ENCODE measurements at regions of chr9 and their contacts with region 1.

Region 1: DNA sequence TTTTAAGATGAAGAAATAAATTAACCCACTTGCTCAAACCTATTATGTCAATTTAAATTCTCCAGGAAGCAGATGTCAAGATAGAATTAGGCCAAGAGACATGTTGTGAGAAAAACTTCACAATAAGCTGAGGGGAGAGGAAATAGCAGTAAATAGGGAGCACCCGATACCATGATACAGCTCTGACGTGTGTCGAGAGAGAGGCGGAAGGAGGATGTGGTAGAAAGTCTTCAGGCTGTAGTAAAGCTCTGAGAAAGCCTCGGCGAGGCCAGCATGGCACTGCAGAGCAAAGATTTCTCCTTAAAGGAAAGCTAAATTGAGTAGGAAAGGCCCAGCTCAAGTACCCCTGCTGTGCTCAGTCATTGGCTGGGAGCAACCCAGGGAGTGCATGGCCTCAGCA is 6.0 kb upstream of the PUM3 start:
- DNase-seq: no peak

Region 2: GRCh38 chr9:2241836-2242741 is 607.9 kb before region 1 on chr9:
- intact Hi-C with region 1: loop called (anchors 2 kb)
- DNase-seq: peak; percentile 88

Region 3: DNA sequence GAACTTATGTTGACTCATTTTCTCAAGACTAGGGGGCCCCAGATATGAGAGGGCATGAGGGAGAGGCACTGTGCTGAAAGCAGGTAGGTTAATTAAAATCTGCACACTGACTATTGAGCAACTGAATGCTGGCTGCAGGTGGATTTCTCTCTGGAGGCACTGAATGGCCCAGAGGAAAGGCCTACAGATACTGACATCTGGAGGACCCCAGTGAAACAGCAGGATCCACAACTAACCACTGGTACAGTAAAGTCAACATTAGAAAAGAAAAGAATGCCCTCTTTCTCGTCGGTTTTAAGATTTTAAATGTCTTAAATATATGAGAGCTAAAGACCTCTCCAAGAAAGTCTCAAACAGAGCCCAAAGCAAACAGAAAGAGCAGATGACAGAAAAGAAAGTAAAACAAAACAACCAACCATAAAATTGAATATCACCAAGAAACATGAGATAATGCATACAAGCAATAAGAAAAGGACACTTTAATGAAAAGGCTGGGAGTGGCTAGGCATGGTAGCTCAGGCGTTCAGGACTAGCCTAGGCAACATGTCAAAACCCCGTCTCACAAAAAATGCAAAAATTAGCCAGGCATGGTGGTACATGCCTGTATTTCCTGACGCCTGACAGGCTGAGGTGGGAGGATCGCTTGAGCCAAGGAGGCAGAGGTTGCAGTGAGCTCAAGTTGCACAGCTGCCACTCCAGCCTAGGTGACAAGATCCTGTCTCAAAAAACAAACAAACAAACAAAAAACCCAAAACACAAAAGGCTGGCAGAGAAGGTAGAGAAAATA is 49.4 kb before region 1 on chr9:
- intact Hi-C with region 1: no loop called
- DNase-seq: no peak

Region 4: DNA sequence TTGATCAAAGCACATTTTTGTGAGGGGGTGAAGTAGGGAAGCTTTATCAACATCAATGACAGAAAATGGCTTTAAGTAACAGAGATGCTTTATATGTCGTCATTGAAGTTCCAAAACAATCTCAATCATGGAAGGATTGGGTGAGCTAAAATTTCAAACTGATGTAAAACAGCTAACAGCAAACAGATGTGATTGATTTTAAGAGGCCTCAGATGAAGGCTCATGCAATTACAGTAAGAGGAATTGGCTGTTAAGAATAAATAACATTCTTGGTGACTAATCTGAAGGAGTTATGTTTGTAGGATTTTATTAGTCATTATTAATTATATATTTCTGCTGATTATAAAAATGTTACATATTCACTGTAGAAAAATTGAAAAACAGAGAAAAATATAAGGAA is 57.5 kb after region 1 on chr9:
- intact Hi-C with region 1: no loop called
- DNase-seq: no peak

Measured in cardiac septum (tissue), 1 donor.